T-cell (primary cell): ENCODE measurements at regions of chr5 and their contacts with region 1.

Region 1: DNA sequence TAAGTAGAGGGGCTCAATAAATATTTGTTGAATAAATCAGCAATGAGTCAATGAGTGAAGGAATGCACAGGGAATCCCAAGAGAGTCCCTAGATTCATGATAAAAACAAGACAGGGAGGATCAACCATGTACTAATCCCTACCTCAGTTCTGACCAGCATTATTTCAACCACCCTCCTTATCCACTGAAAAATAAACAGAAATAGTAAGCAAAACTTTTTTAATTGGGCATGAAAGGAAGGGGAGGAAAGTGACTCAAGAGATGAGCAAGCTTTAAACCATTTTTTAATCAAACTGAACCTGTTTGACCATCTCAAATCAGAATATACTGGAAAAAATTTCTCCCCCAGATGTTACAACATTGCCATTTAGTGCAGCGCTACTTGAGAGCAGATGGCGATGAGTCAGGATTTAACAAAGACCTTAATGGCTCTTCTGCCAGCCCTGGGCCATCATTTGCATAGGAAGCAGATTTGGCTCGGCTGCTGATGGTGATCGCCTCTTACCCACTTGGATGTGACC is 194.8 kb upstream of the SLC30A5 start:
- DNase-seq: no peak
- ATAC-seq: no peak
- H3K4me3 ChIP-seq: no peak overlapping the region
- H3K4me3 Mint-ChIP-seq: no peak overlapping the region
- H3K27ac ChIP-seq: no peak overlapping the region
- H3K27ac Mint-ChIP-seq: no peak overlapping the region
- H3K4me1 ChIP-seq: peaks cover 2 to 7% of the 10 kb centered on the region in 2 experiments
- H3K4me1 Mint-ChIP-seq: peaks cover 7 to 16% (median 15%) of the 10 kb centered on the region in 3 donors
- H3K27me3 ChIP-seq: no peaks in the 10 kb centered on the region
- H3K27me3 Mint-ChIP-seq: no peaks in the 10 kb centered on the region

Region 2: GRCh38 chr5:68122439-68123328 is 776.3 kb before region 1 on chr5:
- CTCF ChIA-PET with region 1: interaction called in 1 of 2 experiments, 14 read pairs
- POLR2A ChIA-PET with region 1: no interaction called
- DNase-seq: peak in 4 of 35 experiments; percentile 1 to 9 (median 4)
- ATAC-seq: peak in 3 of 4 experiments; percentile 27 to 64 (median 32)
- H3K4me3 ChIP-seq: no peak overlapping the region
- H3K4me3 Mint-ChIP-seq: peak overlapping the region in 1 of 3 donors; percentile 17
- H3K27ac ChIP-seq: no peak overlapping the region
- H3K27ac Mint-ChIP-seq: no peak overlapping the region
- H3K4me1 ChIP-seq: peaks cover 12 to 16% of the 10 kb centered on the region in 2 experiments
- H3K4me1 Mint-ChIP-seq: peaks cover 23 to 37% (median 33%) of the 10 kb centered on the region in 3 donors
- H3K27me3 ChIP-seq: peaks cover 0 to 10% of the 10 kb centered on the region in 2 experiments
- H3K27me3 Mint-ChIP-seq: no peaks in the 10 kb centered on the region